ENCODE measurements at regions of chr20 and their contacts with region 1.

Region 1: GRCh38 chr20:23350196-23350903 is at the start of gene NXT1:
- DNase-seq: peak; percentile 84

Region 2: DNA sequence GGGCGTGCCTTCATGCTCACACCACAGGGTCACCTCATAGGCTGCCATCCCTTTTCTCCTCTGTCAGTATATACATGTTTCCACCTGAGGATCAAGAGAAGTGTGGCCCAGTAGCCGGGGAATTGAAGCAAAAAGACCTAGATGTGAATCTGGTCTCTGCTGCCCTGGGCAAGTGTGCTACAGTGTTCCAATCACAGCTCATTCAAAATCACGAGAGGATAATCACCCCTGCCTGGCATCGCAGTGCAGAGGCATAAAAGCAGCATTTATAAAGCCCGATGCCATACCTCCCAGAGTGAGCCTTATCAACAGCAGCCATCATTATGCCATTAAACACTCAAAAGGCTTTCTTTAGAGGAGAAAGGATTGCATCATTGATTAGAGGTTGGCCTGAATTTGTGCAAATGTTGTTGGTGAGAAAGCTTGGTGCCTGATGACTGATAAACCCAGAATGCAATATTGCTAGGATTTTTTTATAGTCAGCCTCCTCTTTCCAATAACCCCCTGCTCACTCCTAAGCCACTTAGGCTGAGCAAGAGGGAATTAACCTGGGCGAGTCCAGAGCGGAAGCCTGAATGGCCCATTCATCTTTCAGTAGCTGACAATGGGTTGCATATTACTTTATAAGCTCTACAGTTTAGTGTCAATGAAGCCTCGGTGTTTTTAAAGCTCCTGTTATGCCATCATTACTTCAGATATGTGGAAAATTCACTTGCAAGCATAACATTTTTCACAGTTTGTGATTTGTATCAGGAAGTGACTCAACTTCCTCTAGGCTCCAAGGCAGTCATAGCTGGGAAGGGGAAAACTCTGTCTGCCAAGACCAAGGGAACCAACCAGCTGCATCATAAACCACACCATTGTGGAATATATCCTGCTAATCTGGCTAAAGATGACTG is 92.3 kb before region 1 on chr20:
- CTCF ChIA-PET with region 1: no interaction called
- POLR2A ChIA-PET with region 1: interaction called, 11 read pairs
- DNase-seq: no peak

Region 3: GRCh38 chr20:23331450-23332350 is 18.6 kb before region 1 on chr20:
- CTCF ChIA-PET with region 1: no interaction called
- POLR2A ChIA-PET with region 1: interaction called, 10 read pairs
- DNase-seq: no peak

Region 4: DNA sequence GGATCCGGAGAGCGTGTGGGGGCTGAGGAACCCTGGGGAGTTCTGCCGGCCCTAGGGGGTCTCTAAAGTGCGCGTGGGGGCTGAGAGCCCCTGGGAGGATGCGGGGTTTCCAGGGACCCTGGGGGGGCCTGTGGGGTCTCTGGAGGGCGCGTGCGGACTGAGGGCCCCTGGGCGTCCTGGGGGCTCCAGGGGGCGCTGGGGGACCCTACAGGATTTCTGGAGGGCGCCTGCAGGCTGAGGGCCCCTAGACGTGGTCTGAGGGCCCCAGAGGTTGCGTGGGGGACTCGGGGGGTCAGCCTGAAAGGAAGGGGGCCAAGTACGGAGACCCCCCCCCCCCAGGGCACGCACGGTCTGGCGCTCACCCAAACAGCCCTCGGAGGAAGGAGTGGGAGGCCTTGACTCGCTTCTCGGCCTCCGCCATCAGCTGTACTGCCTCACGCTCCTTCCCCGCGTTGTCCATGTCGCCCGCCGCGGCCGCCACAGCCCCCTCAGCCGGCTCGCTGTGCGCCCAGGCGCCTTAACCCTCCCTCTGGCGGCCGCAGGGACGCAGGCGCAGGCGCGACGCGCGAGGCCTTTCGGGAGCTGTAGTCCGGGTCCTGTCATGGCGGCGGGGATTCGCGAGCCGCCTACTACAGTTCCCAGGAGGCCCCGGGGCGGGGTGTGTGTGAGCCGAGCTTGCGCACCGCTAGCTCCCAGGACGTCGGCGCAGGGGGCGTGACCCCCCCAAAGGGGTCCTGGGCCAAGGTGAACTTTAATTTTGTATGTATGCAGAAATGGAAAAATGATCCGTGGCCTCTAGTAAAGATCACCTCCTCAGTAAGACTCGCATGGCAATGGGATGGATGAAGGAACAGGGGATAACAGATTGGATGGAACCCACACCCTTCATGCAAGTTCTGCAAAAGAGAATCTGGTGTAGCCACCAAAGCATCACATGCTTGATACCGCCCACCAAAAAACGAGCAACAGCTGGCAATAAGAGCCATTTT is 70.9 kb after region 1 on chr20 and contains the start of gene NAPB:
- CTCF ChIA-PET with region 1: interaction called, 3 read pairs
- POLR2A ChIA-PET with region 1: interaction called, 18 read pairs
- DNase-seq: peak; percentile 93

Measured in HEK293T (cell line).